Transverse colon (tissue), 4 donors: ENCODE measurements at regions of chr6 and their contacts with region 1.

Region 1: GRCh38 chr6:85678602-85679444 is 36.1 kb upstream of the SYNCRIP start:
- DNase-seq: peak; percentile 98
- H3K4me3 ChIP-seq: peak overlapping the region; percentile 85 to 99 (median 97)
- H3K27ac ChIP-seq: peak overlapping the region; percentile 95 to 99 (median 96)
- H3K4me1 ChIP-seq: peaks cover 4 to 45% (median 30%) of the 10 kb centered on the region in 4 donors
- H3K27me3 ChIP-seq: no peaks in the 10 kb centered on the region
- CTCF ChIP-seq: no peak
- EP300 ChIP-seq: no peak
- POLR2A ChIP-seq: peak; percentile 100

Region 2: GRCh38 chr6:85593438-85594196 is 85.2 kb before region 1 on chr6 and contains the start of gene SNX14:
- in situ Hi-C with region 1: loop called in 1 of 4 experiments (anchors 5 kb)
- intact Hi-C with region 1: loop called (anchors 10 kb)
- DNase-seq: peak; percentile 96
- H3K4me3 ChIP-seq: peak within 1 kb of the TSS; percentile 67 to 91 (median 70)
- H3K27ac ChIP-seq: peak within 1 kb of the TSS; percentile 94 to 99 (median 99)
- H3K4me1 ChIP-seq: peaks cover 12 to 36% (median 18%) of the 10 kb centered on the region in 4 donors
- H3K27me3 ChIP-seq: no peaks in the 10 kb centered on the region
- CTCF ChIP-seq: peak in 3 of 5 experiments; percentile 9 to 50 (median 26)
- EP300 ChIP-seq: no peak
- POLR2A ChIP-seq: peak; percentile 93
- total RNA-seq, gene SNX14: 27.3 to 134 (median 116) TPM

Region 3: GRCh38 chr6:85642774-85643536 is 35.9 kb before region 1 on chr6 and contains the start of gene SYNCRIP:
- in situ Hi-C with region 1: no loop called
- intact Hi-C with region 1: loop called (anchors 1 kb)
- DNase-seq: peak; percentile 99
- H3K4me3 ChIP-seq: peak within 1 kb of the TSS; percentile 66 to 99 (median 95)
- H3K27ac ChIP-seq: peak within 1 kb of the TSS; percentile 97 to 100 (median 98)
- H3K4me1 ChIP-seq: peaks cover 9 to 46% (median 32%) of the 10 kb centered on the region in 4 donors
- H3K27me3 ChIP-seq: no peaks in the 10 kb centered on the region
- CTCF ChIP-seq: no peak
- EP300 ChIP-seq: peak; percentile 53
- POLR2A ChIP-seq: peak; percentile 98
- total RNA-seq, gene SYNCRIP: 27.7 to 84.8 (median 41.9) TPM